ENCODE measurements at regions of chr4 and their contacts with region 1.

Region 1: DNA sequence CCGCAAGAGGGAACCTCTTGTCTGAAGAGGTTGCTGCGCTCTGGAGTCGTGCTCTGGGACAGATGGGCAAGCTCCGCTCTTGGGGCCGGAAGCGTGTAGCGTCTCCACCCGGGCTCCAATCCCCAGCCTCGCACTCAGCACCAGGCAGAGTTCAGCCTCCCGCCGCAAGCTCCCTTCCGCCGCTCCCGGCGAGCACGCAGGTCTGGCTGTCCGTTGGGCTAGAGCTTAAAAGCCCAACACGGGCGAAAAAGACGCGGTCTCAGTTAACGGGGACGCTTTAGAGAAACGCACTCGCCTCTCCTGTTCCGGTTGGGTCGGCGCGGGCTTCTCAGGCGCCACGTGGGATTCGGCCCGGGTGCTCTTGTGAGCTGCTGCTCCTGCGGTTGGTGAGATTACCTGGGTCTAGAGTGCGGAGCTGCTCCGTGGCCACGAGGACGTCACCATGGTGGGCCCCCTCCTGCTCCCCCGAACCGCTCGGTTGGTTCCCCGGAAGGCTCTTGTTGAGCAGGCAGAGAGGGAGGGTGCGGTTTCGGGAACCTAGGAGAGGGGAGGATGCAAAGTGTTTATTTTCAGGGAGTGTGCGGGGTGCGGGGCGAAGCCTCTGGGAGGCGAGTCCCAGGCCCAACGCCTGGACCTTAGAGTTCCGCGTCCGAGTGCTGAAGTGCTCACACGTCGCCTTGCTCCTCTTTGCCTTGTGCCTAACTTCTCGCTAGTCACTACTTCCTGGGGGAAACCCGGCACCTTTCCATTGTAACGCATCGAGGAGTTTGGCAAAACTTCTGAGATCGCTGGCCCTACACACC is at the start of gene TMA16:
- DNase-seq: peak; percentile 89
- H3K4me3 Mint-ChIP-seq: peak within 1 kb of the TSS; percentile 89
- H3K27ac Mint-ChIP-seq: peak within 1 kb of the TSS; percentile 94
- H3K4me1 Mint-ChIP-seq: peaks cover 37% of the 10 kb centered on the region
- H3K27me3 Mint-ChIP-seq: peaks cover 6% of the 10 kb centered on the region
- total RNA-seq, gene TMA16: 27.9 to 30.3 TPM

Region 2: DNA sequence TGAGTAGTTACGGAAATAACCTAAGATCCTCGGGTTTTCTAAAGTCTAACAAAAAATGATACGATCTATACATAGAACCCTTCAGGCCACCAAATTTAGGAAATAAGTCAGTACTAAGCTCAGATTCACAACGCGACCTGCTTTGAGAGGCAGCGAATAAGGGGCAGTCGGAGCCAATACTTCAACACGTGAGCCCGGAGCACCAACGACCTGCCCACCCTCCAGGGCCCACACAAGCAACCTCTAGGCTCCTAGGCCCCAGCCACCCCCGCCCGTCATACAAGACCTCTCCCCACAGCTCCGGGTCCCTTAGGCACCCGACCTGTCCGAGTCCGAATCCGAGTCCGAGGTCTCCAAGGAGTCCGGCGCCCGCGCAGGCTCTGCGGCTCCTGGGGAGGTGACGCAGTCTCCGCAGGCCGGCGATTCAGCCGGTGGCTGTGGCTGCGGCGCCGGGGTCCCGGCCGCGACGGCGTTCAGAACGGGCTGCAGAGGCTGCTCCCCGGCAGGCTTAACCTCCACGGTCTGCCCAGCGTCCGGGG is 328.5 kb before region 1 on chr4:
- CTCF ChIA-PET with region 1: interaction called, 5 read pairs
- POLR2A ChIA-PET with region 1: interaction called, 17 read pairs
- DNase-seq: peak; percentile 62
- H3K4me3 Mint-ChIP-seq: peak overlapping the region; percentile 91
- H3K27ac Mint-ChIP-seq: peak overlapping the region; percentile 90
- H3K4me1 Mint-ChIP-seq: peaks cover 42% of the 10 kb centered on the region
- H3K27me3 Mint-ChIP-seq: no peaks in the 10 kb centered on the region

Region 3: DNA sequence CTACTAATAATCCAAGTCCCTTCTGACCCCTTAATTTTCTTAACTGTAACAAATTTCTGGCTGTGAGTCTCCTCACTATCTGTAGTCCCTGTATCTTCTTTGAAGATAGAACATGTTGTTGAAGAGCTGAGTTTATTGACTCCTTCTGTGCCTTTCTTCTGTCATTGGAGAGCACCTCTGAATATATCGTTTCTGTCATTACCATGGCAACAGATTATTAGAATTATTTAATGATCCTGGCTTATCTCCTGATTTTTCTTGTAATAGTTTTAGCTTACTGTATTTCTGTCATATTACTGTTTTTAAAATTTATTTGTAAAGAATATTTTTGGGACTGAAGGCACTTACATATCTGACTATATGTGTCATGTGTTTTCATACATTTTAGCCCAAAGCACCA is 12.1 kb after region 1 on chr4:
- CTCF ChIA-PET with region 1: no interaction called
- POLR2A ChIA-PET with region 1: interaction called, 11 read pairs
- DNase-seq: no peak
- H3K4me3 Mint-ChIP-seq: no peak overlapping the region
- H3K27ac Mint-ChIP-seq: no peak overlapping the region
- H3K4me1 Mint-ChIP-seq: peaks cover 15% of the 10 kb centered on the region
- H3K27me3 Mint-ChIP-seq: no peaks in the 10 kb centered on the region

Region 4: GRCh38 chr4:163673848-163674697 is 179.5 kb after region 1 on chr4:
- CTCF ChIA-PET with region 1: no interaction called
- POLR2A ChIA-PET with region 1: no interaction called
- DNase-seq: no peak
- H3K4me3 Mint-ChIP-seq: no peak overlapping the region
- H3K27ac Mint-ChIP-seq: no peak overlapping the region
- H3K4me1 Mint-ChIP-seq: no peaks in the 10 kb centered on the region
- H3K27me3 Mint-ChIP-seq: no peaks in the 10 kb centered on the region

Measured in activated CD4-positive, alpha-beta memory T cell treated with anti-CD3 and anti-CD28 coated beads, Interleukin-2, amount 10 ng/mL, durations not matched to agents 7 days and 5 days (primary cell).